Left lung (tissue), 14 donors: ENCODE measurements at regions of chr12 and their contacts with region 1.

Region 1: DNA sequence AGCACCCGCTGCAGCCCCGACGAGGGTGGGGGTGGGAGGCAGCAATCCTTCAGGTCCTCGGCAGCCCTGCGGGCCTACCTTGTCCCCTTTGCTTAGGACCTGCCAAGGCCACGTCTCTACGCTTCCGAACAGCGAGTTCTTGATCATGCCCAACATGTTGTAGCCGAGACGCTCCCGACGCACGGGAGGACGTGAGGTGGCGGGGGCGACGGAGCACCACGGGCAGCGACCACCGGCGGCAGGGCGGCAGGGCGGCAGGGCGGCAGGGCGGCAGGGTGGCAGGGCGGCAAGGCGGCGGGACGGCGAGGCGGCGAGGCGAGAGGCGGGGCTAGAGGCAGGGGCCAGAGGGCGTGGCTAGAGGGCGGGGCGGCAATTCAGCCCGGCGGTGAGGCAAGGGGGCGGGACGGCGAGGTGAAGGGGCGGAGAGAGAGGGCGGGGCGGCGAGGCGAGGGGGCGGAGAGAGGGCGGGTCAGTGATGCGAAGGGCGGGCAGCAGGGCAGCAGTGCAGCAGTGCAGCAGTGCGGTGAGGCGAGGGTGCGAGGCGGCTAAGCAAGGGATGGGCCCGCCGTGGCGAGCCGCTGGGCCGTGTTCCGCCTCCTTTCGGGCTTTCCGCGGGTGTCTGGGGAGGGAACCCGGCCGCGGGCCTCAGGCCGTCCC is at the start of gene HEBP1:
- DNase-seq: peak; percentile 93 to 100 (median 97)
- ATAC-seq: peak; percentile 95
- H3K4me3 ChIP-seq: peak within 1 kb of the TSS; percentile 77 to 83
- H3K27ac ChIP-seq: peak within 1 kb of the TSS; percentile 92 to 95
- H3K4me1 ChIP-seq: peaks cover 10 to 55% of the 10 kb centered on the region in 2 donors
- H3K27me3 ChIP-seq: no peaks in the 10 kb centered on the region
- CTCF ChIP-seq: no peak
- polyA plus RNA-seq, gene HEBP1: 58.9 to 75.8 (median 64.6) TPM

Region 2: GRCh38 chr12:12491606-12492005 is 508.5 kb before region 1 on chr12:
- intact Hi-C with region 1: no loop called
- DNase-seq: no peak
- ATAC-seq: no peak
- H3K4me3 ChIP-seq: no peak overlapping the region
- H3K27ac ChIP-seq: no peak overlapping the region
- H3K4me1 ChIP-seq: no peaks in the 10 kb centered on the region
- H3K27me3 ChIP-seq: no peaks in the 10 kb centered on the region
- CTCF ChIP-seq: no peak

Region 3: DNA sequence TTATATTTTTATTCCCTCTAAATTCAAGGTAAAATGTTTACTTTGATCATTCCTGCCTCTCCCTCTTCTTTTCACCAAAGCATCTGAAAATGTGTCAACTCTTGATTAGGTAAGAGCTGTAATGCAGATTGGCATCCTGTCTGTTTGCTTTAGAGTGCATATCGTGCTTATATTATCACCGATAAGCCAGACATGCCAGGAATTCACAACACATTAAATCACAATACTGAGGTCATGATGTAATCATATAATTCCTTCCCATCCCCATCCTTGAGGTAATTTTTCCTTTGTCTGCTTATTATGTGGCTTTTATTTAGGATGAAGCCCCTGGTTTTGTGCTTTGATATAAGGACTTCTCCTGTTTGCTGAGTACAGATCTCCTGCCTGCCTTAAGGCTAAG is 176.8 kb before region 1 on chr12:
- intact Hi-C with region 1: no loop called
- DNase-seq: no peak
- ATAC-seq: no peak
- H3K4me3 ChIP-seq: no peak overlapping the region
- H3K27ac ChIP-seq: no peak overlapping the region
- H3K4me1 ChIP-seq: peaks cover 16 to 21% of the 10 kb centered on the region in 2 donors
- H3K27me3 ChIP-seq: no peaks in the 10 kb centered on the region
- CTCF ChIP-seq: no peak

Region 4: DNA sequence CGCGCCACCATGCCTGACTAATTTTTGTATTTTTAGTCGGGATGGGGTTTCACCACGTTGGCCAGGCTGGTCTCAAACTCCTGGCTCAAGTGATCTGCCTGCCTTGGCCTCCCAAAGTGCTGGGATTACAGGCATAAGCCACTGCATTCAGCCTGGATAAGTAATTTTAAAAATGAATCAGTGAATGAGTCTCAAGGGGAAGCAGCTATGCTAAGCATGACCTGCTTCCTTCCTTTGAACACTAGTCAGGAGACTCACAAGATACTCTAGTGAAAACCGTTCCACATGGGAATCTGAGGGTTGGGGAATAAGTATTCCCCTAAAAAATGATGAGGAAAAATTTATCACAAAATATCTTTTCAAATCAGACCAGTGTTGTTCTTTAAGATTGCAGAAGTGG is 33.4 kb after region 1 on chr12:
- intact Hi-C with region 1: no loop called
- DNase-seq: no peak
- ATAC-seq: no peak
- H3K4me3 ChIP-seq: no peak overlapping the region
- H3K27ac ChIP-seq: no peak overlapping the region
- H3K4me1 ChIP-seq: no peaks in the 10 kb centered on the region
- H3K27me3 ChIP-seq: no peaks in the 10 kb centered on the region
- CTCF ChIP-seq: no peak

Region 5: DNA sequence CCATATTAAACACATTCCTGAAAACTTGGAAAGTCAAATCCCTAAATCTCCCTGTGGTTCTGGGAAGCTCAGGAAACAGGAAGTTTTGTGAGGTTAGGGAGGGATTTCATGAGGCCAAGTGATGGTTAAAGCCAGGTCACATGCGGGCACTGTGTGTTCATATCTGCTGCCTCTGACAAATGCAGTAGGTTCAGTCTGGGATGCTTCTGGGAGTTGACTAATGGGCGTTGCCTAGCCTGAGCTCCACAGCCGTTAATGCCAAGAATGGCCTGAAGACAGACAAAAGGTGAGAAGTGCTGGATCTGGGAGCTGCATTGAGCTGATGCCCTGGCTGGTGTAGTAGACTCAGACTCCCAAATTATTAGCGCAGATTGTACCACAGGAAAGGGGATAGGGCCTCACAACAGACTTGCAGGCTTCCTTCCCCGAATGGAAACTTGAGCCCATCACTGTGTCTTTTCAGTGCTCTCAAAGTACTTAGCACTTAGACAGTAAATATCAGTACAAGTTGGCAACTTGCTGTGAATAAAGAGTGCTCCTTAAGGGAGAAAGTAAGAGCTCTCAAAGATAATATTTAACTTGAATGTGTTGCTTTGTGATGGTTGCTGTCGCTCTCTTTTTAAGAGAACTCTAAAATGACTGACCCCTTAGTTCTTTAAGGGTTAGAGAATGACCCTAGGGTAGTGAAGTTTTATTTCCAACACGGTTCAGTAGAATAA is 86.0 kb after region 1 on chr12:
- intact Hi-C with region 1: loop called in 1 of 2 experiments (anchors 10 kb)
- DNase-seq: peak in 1 of 4 donors; percentile 13
- ATAC-seq: peak; percentile 84
- H3K4me3 ChIP-seq: no peak overlapping the region
- H3K27ac ChIP-seq: no peak overlapping the region
- H3K4me1 ChIP-seq: no peaks in the 10 kb centered on the region
- H3K27me3 ChIP-seq: no peaks in the 10 kb centered on the region
- CTCF ChIP-seq: no peak

Region 6: GRCh38 chr12:13223179-13223859 is 223.2 kb after region 1 on chr12:
- intact Hi-C with region 1: loop called in 1 of 2 experiments (anchors 10 kb)
- DNase-seq: no peak
- ATAC-seq: no peak
- H3K4me3 ChIP-seq: no peak overlapping the region
- H3K27ac ChIP-seq: no peak overlapping the region
- H3K4me1 ChIP-seq: peaks cover 4 to 9% of the 10 kb centered on the region in 2 donors
- H3K27me3 ChIP-seq: no peaks in the 10 kb centered on the region
- CTCF ChIP-seq: no peak